Ovary (tissue), 10 donors: ENCODE measurements at regions of chr10 and their contacts with region 1.

Region 1: DNA sequence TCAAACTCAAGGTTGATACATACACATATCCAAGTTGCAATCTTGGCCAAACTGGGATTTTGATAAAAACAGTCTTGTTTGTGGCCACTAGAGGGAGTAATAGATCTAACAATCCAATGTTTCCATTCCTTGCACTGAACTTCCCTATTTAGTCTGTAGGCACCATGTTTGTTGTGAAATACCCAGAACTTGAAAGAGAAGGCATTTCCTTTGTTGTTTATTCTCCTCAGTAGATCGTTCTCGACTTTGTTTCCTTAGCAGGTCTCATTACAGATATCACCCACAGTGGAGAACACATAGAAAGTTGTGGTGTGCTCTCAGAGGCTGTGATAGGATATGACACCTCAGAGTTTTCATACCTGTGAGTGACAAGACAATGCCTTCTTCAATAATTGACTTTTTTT is 70.3 kb upstream of the MXI1 start:
- DNase-seq: no peak
- H3K4me3 ChIP-seq: no peak overlapping the region
- H3K27ac ChIP-seq: no peak overlapping the region
- H3K4me1 ChIP-seq: peaks cover 3% of the 10 kb centered on the region
- H3K27me3 ChIP-seq: no peaks in the 10 kb centered on the region
- CTCF ChIP-seq: peak; percentile 41 to 94 (median 89)
- EP300 ChIP-seq: no peak
- POLR2A ChIP-seq: peak; percentile 11

Region 2: GRCh38 chr10:110210674-110211464 is 73.7 kb after region 1 on chr10:
- intact Hi-C with region 1: loop called in 2 of 4 experiments (anchors 5 to 10 kb)
- DNase-seq: peak; percentile 98 to 99 (median 99)
- H3K4me3 ChIP-seq: peak overlapping the region; percentile 79
- H3K27ac ChIP-seq: peak overlapping the region; percentile 71 to 95
- H3K4me1 ChIP-seq: peaks cover 7% of the 10 kb centered on the region
- H3K27me3 ChIP-seq: no peaks in the 10 kb centered on the region
- CTCF ChIP-seq: no peak
- EP300 ChIP-seq: peak; percentile 23
- POLR2A ChIP-seq: peak; percentile 87

Region 3: GRCh38 chr10:110279407-110279986 is 142.4 kb after region 1 on chr10:
- intact Hi-C with region 1: loop called (anchors 2 to 5 kb)
- DNase-seq: peak in 4 of 5 donors; percentile 29 to 72 (median 52)
- H3K4me3 ChIP-seq: no peak overlapping the region
- H3K27ac ChIP-seq: no peak overlapping the region
- H3K4me1 ChIP-seq: peaks cover 5% of the 10 kb centered on the region
- H3K27me3 ChIP-seq: no peaks in the 10 kb centered on the region
- CTCF ChIP-seq: peak; percentile 42 to 80 (median 79)
- EP300 ChIP-seq: no peak
- POLR2A ChIP-seq: no peak

Region 4: DNA sequence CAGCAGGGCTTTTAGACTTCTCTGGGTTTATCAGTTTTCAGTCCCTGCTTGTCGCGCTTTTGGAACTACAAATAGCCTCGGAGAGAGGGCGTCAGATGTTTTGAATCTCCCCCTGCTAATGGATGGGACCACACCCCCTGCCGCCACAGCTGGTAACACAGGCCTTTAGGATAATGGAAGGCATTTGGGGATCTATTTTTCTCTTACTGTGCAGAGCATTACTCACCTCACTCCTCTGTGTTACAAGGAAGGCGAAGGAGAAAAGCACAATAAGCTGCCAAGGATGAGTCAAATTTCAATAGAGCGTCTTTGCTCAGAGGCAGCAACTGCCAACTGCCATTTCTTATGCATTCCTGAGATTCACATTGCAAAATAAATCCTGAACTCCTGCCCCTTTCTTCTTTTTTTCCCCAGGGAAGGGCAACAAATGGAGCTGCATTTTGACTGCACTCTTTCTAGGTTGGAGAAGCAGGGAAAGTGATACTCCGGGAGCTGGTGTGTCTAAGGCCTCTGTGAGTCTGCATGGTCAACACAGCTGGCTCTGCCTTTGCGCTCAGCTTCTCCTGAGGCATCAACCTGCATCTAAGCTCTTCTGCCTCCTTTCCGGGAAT is 199.1 kb after region 1 on chr10:
- intact Hi-C with region 1: no loop called
- DNase-seq: peak in 3 of 5 donors; percentile 24 to 52 (median 30)
- H3K4me3 ChIP-seq: no peak overlapping the region
- H3K27ac ChIP-seq: peak overlapping the region in 1 of 2 donors; percentile 7
- H3K4me1 ChIP-seq: peaks cover 6% of the 10 kb centered on the region
- H3K27me3 ChIP-seq: no peaks in the 10 kb centered on the region
- CTCF ChIP-seq: no peak
- EP300 ChIP-seq: no peak
- POLR2A ChIP-seq: no peak

Region 5: GRCh38 chr10:110547139-110547761 is 410.1 kb after region 1 on chr10:
- intact Hi-C with region 1: loop called in 3 of 4 experiments (anchors 5 to 10 kb)
- DNase-seq: no peak
- H3K4me3 ChIP-seq: no peak overlapping the region
- H3K27ac ChIP-seq: no peak overlapping the region
- H3K4me1 ChIP-seq: no peaks in the 10 kb centered on the region
- H3K27me3 ChIP-seq: no peaks in the 10 kb centered on the region
- CTCF ChIP-seq: peak; percentile 47 to 81 (median 81)
- EP300 ChIP-seq: no peak
- POLR2A ChIP-seq: no peak